Naive thymus-derived CD4-positive, alpha-beta T cell (primary cell): ENCODE measurements at regions of chr10 and their contacts with region 1.

Region 1: DNA sequence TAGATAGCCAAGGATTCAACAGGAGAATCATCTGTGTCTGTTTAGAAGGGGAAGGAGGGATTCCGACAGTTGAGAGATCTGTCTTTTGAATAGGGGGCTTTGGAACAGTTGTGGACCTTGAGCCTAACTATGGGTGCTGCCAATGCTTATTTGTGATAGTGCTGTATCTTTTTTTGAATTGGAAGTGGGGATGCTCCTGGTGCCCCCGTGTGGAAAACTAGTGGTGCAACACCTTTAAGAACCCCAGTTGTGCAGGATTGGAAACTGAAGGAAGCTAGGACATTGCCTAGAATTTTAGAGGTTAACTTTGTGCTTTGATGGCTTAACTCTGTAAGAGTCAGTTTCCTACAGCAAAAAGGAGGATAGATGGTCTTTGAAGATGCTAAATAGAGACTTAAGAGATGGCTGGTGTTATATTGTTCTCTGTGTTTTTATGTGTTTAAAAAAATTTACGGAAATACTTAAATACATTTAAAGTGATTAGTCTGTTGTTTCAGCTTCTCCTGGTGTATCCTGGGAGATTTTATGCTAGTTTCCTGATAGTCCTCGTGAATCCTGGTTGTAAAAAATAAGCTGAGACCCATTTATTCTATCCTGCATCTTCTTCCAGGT is 69.3 kb downstream of the AP3M1 start:
- DNase-seq: peak in 7 of 9 donors; percentile 14 to 51 (median 41)
- ATAC-seq: peak; percentile 71
- H3K4me3 ChIP-seq: no peak overlapping the region
- H3K4me3 Mint-ChIP-seq: no peak overlapping the region
- H3K27ac ChIP-seq: no peak overlapping the region
- H3K27ac Mint-ChIP-seq: no peak overlapping the region
- H3K4me1 ChIP-seq: peaks cover 0 to 15% of the 10 kb centered on the region in 2 donors
- H3K4me1 Mint-ChIP-seq: peaks cover 0 to 40% (median 6%) of the 10 kb centered on the region in 7 donors
- H3K27me3 ChIP-seq: no peaks in the 10 kb centered on the region
- H3K27me3 Mint-ChIP-seq: no peaks in the 10 kb centered on the region

Region 2: GRCh38 chr10:74058658-74059057 is 22.6 kb before region 1 on chr10:
- CTCF ChIA-PET with region 1: interaction called, 3 read pairs
- POLR2A ChIA-PET with region 1: no interaction called
- intact Hi-C with region 1: loop called (anchors 2 kb)
- DNase-seq: peak in 7 of 9 donors; percentile 12 to 60 (median 29)
- ATAC-seq: peak; percentile 70
- H3K4me3 ChIP-seq: no peak overlapping the region
- H3K4me3 Mint-ChIP-seq: peak overlapping the region in 7 of 10 donors; percentile 1 to 76 (median 8)
- H3K27ac ChIP-seq: no peak overlapping the region
- H3K27ac Mint-ChIP-seq: peak overlapping the region in 5 of 9 donors; percentile 4 to 52 (median 12)
- H3K4me1 ChIP-seq: peaks cover 10 to 15% of the 10 kb centered on the region in 2 donors
- H3K4me1 Mint-ChIP-seq: peaks cover 18 to 44% (median 26%) of the 10 kb centered on the region in 7 donors
- H3K27me3 ChIP-seq: no peaks in the 10 kb centered on the region
- H3K27me3 Mint-ChIP-seq: no peaks in the 10 kb centered on the region